ENCODE measurements at regions of chr3 and their contacts with region 1.

Region 1: DNA sequence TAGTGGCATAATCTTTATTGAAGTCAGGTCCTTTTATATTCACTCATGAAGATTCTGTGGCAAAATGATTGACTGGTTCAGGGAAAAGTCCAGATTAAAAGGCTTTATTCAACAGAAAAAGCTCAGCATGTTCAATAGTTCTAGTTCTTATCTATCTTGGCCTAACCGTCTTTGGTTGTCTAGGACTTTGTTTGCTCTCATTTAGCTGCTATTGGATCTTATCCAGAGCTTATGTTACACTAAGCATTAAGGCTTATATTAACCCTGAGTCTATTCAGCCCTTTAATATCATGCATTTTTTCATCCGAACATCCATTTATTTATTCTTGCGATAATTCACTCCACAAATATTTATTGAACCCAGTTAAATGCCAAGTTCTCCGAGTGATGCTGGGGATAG is 601.0 kb upstream of the SGO1 start:
- DNase-seq: no peak
- CTCF ChIP-seq: no peak

Region 2: DNA sequence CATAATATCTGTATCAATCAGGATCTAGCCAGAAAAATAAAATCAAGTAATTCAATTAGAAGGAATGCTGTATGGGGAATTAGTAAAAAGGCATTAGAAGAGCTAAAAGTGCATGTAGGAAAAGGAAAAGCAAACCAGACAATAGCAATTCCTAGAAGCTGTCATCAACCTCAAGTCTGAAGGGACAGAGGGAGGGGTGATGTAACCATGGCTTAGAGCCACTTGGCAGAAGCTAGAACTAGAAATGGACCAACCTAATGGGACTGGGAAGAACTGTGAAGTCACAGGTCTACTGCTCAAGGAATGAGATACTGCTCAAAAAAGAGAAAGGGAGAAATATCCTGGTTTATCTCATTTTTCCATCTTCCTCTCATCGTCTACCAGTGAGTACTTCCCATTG is 10.3 kb before region 1 on chr3:
- CTCF ChIA-PET with region 1: interaction called, 10 read pairs
- POLR2A ChIA-PET with region 1: no interaction called
- DNase-seq: no peak
- CTCF ChIP-seq: no peak